ENCODE measurements at regions of chr3 and their contacts with region 1.

Region 1: DNA sequence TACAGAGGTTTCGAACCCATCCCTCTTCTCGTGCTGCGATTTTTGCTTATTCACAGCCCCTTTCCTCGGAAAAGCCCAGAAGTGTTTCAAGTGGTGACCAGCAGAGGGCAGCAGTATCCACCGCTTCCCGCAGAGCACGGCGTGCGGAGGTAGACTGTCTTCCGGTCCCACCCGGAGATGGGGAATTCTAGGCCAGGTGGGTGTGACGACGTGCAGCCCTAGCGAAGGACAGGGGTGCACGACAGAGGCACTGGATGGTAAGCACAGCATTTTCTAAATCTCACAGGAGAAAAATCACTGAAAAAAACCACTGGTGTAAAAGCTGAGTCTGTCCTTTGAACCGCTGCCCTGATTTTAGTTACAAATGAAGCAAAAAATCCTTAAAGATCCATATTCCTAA is 7.4 kb upstream of the PSMD6 start:
- DNase-seq: peak; percentile 57 to 78
- ATAC-seq: peak; percentile 92

Region 2: DNA sequence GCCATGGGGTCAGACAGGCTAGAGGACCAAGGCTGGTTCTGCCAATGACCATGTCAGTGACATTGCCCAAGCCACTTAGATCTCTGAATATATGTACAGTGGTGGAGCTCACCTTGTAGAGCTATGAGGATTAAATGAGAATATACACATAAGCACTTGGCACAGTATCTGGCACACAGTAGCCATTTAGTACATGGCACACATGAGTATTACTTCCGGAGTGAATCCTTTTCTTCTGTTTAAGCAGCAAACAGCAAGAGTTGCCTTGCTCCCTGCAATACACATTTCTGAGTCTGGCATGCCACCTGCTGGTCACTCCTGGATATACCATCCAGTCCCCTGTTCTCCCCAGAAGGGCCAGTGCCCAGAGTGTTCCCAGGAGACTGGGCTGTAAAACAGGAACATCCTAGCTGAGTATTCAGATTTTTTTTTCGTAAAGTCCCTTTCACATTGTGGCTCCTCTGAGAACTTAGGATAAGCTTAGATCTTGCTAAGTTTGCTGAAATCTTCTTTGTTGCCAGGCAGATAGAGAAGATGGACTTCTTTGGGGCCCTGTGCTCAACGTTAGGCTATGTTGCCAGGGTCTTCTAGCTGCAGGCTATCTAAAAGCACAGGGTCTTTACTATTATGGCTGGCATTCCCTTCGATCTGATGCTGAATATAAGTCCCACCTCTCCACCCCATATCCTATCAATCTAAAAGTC is 453.7 kb after region 1 on chr3:
- intact Hi-C with region 1: loop called in 1 of 2 experiments (anchors 2 kb)
- DNase-seq: peak; percentile 60 to 76
- ATAC-seq: peak; percentile 91

Region 3: DNA sequence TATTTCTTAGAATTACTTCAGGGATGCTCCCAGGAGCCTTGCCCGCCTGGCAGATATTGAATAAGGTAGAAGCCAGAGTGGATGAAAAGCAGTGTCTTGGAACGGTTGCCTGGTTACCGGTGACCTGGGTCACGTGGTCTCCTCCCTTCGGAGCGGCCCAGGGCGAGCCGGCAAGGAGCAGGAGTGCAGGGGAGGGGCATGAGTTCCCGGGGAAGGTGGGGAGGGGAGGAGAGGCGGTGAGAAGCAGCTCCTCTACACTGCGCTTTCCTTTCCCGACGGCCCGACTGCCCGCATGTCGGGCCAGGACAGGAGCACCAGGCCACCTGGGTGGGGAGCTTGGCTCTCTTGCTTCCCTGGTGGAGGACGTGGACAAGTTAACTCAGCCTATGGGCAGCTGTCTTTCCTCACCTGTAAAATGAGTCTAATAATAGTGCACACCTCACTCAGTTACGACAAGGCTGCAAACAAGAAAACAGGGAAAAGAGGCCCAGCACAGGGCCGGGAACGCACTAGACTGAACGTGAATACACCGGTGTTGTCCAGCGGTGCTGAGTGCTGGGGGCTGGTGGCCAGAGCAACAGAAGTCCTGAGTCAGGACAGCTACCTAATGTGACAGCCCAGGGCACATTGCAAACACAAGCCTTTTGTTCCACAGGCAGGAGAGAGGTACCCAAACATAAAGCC is 458.8 kb after region 1 on chr3:
- intact Hi-C with region 1: loop called (anchors 2 to 10 kb)
- DNase-seq: peak; percentile 33 to 46
- ATAC-seq: peak; percentile 91

Measured in left colon (tissue), 2 donors.